PC-9 (cell line): ENCODE measurements at regions of chr9 and their contacts with region 1.

Region 1: DNA sequence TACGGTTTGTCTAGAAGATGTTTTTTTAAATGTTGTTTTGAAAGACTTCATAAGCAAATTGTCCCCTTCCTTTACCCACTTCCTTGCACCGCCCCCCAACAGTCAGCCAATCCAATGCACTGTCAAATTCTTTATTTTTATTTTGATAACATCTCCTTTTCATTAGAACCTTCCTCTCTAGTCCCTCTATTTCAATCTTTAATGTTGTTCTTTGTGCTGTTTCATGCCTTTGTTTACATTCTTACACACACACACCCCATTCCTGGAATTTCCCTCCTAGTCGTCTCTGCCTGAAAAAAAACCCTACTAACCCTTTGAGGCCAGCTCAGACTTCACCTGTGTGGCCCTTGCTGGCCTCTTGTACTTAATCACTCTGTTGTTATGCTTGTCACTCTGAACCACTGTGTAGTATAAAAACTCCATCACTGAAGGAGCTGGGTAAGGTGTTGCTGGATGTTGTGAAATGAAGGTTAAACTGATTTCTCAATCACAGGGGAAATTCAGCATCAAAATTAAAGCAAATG is 133.4 kb downstream of the UGCG start:
- DNase-seq: peak; percentile 83 to 99
- H3K4me3 ChIP-seq: 0 out of 2 replicates have a peak overlapping the region, but pooled peaks have one; percentile 15
- H3K27ac ChIP-seq: peak overlapping the region; percentile 83
- H3K4me1 ChIP-seq: peaks cover 37% of the 10 kb centered on the region
- H3K27me3 ChIP-seq: no peaks in the 10 kb centered on the region
- CTCF ChIP-seq: no peak

Region 2: DNA sequence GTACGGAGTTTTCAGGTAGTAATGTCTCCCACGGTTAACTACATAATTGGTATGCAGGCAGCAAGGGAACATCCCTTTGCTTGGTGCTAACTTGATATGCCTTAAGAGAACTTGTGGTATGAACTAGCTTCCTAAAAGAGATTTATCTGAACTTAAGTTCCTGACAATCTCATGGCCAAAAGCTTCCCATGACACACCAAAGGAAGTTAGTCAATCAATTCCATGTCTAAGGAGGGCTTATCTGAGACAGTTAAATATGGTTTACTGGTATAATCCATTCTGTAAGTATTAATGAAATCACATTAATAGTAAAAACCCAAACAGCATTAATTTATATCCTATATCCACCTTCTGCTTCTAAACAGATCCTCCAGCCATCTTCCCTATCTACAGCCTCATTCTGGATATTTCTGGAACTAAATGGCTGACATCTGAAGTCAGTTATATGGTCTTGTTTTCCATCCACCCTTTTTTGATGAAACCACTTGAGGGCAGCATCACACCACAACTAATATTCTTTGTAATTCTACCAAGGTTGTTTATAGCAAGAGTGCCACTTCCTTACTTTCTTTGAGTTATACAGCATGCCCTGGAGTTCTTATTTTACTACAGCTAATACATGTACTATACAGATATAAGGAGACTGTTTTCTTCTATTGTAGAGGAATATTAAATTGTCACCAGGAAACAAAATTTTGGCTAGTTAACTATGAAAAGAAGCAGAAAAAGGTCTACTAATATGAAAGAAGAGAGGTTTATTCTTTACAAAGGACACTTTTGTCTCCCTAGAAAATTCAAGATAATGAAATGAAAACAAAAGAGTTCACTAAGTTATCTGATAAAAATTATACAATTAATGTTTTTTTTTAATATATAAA is 270.0 kb before region 1 on chr9:
- CTCF ChIA-PET with region 1: no interaction called
- POLR2A ChIA-PET with region 1: no interaction called
- intact Hi-C with region 1: loop called (anchors 1 kb)
- DNase-seq: peak; percentile 53 to 73
- H3K4me3 ChIP-seq: no peak overlapping the region
- H3K27ac ChIP-seq: no peak overlapping the region
- H3K4me1 ChIP-seq: peaks cover 6% of the 10 kb centered on the region; the same call in 1 of the 2 replicates
- H3K27me3 ChIP-seq: no peaks in the 10 kb centered on the region
- CTCF ChIP-seq: peak; percentile 81

Region 3: DNA sequence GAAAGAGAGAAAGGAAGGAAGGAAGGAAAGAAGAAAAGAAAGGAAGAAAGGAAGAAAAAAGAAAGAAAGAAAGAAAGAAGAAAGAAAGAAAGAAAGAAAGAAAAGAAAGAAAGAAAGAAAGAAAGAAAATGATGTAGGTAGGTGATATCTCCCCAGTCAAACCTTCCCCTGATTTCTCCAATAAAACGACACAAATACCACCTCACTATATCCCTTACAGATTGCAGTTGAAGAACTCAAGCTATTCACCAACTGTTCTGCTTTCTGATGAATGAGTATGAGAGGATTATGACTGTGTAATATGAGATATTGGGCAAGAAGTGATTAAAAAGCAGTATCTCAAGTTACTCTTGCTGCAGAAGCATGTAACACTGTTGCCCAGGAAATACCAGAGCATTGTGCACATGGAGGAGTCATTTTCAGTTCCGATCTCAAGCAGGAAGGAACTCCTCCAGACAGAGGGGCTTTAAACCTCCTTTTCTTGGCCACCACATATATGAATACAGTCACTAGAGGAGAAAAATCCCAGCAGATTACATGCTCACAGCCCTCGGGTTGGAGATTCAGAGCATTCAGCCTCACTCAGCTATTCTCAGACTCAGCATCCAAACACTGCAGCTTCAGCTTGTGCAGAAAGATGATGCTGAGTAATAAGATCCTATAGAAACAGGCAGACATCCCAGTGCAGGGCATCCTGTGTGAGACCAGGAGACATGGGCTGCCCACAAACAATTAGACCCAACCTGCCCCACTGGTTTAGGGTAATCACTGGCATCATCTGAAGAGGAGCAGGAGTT is 71.9 kb before region 1 on chr9:
- CTCF ChIA-PET with region 1: no interaction called
- POLR2A ChIA-PET with region 1: interaction called, 8 read pairs
- intact Hi-C with region 1: loop called (anchors 2 kb)
- DNase-seq: peak; percentile 68 to 96
- H3K4me3 ChIP-seq: peak overlapping the region; percentile 7; the same call in 1 of the 2 replicates
- H3K27ac ChIP-seq: peak overlapping the region; percentile 83
- H3K4me1 ChIP-seq: peaks cover 35% of the 10 kb centered on the region
- H3K27me3 ChIP-seq: no peaks in the 10 kb centered on the region
- CTCF ChIP-seq: no peak

Region 4: GRCh38 chr9:112012026-112012902 is 17.7 kb before region 1 on chr9:
- CTCF ChIA-PET with region 1: no interaction called
- POLR2A ChIA-PET with region 1: no interaction called
- intact Hi-C with region 1: loop called (anchors 2 kb)
- DNase-seq: peak; percentile 83 to 91
- H3K4me3 ChIP-seq: peak overlapping the region; percentile 3; the same call in 1 of the 2 replicates
- H3K27ac ChIP-seq: peak overlapping the region; percentile 91
- H3K4me1 ChIP-seq: peaks cover 45% of the 10 kb centered on the region
- H3K27me3 ChIP-seq: no peaks in the 10 kb centered on the region
- CTCF ChIP-seq: no peak

Region 5: GRCh38 chr9:112162621-112163413 is 132.8 kb after region 1 on chr9:
- CTCF ChIA-PET with region 1: no interaction called
- POLR2A ChIA-PET with region 1: no interaction called
- intact Hi-C with region 1: no loop called
- DNase-seq: no peak
- H3K4me3 ChIP-seq: no peak overlapping the region
- H3K27ac ChIP-seq: no peak overlapping the region
- H3K4me1 ChIP-seq: peaks cover 25% of the 10 kb centered on the region
- H3K27me3 ChIP-seq: no peaks in the 10 kb centered on the region
- CTCF ChIP-seq: no peak

Region 6: GRCh38 chr9:112174218-112174964 is 144.4 kb after region 1 on chr9:
- CTCF ChIA-PET with region 1: no interaction called
- POLR2A ChIA-PET with region 1: no interaction called
- intact Hi-C with region 1: loop called (anchors 5 kb)
- DNase-seq: peak; percentile 81
- H3K4me3 ChIP-seq: peak overlapping the region; percentile 84; the same call in 1 of the 2 replicates
- H3K27ac ChIP-seq: peak overlapping the region; percentile 86
- H3K4me1 ChIP-seq: peaks cover 63% of the 10 kb centered on the region
- H3K27me3 ChIP-seq: no peaks in the 10 kb centered on the region
- CTCF ChIP-seq: no peak